ENCODE measurements at regions of chr1 and their contacts with region 1.

Region 1: GRCh38 chr1:155127105-155127964 is at the start of gene EFNA1:
- DNase-seq: peak; percentile 89 to 92
- H3K4me3 ChIP-seq: peak within 1 kb of the TSS; percentile 67 to 94 (median 82)
- H3K27ac ChIP-seq: peak within 1 kb of the TSS; percentile 96 to 98 (median 98)
- H3K4me1 ChIP-seq: peaks cover 43 to 54% of the 10 kb centered on the region in 2 donors
- H3K27me3 ChIP-seq: no peaks in the 10 kb centered on the region
- CTCF ChIP-seq: no peak
- POLR2A ChIP-seq: peak; percentile 80 to 96
- total RNA-seq, gene EFNA1: 56.1 to 129 (median 83.1) TPM

Region 2: DNA sequence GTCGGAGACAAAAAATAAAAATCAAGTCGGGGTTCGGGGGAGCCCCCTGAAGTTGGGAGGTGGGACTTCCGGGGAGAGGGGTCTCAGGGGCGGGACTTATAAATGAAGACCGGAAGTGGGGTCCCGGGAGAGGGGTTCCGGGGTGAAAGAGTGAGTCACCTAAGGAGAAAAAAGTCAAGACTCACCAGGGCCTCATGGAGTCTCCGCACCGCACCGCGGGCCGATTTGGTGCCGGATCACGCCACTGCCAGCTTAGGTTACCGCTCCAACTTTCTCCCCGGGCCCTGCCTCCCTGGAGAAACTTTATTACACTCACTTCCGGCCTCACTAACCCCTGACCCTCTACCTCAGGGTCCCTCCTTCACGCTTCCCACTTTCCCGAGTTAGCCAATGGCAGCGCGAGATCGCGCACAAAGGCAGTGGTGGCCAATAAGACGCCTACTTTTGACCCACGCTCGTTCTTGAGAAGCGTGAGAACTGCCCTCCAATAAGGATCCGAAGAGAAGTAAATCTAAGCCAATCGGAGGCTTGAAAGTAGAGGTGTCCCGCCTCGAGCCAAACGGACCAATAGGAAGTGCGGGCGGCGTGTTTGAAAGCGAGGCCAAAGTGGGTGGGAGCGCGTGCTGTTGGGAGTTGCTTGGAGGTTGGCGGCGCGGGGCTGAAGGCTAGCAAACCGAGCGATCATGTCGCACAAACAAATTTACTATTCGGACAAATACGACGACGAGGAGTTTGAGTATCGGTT is 153.1 kb before region 1 on chr1 and contains the start of gene CKS1B:
- intact Hi-C with region 1: no loop called
- DNase-seq: peak; percentile 97 to 98
- H3K4me3 ChIP-seq: peak within 1 kb of the TSS; percentile 16 to 73 (median 51)
- H3K27ac ChIP-seq: peak within 1 kb of the TSS; percentile 95 to 99 (median 98)
- H3K4me1 ChIP-seq: peaks cover 37 to 51% of the 10 kb centered on the region in 2 donors
- H3K27me3 ChIP-seq: no peaks in the 10 kb centered on the region
- CTCF ChIP-seq: no peak
- POLR2A ChIP-seq: peak in 1 of 2 donors; percentile 55
- total RNA-seq, gene CKS1B: 14.3 to 29.5 (median 22.6) TPM

Region 3: GRCh38 chr1:155091071-155091709 is 36.1 kb before region 1 on chr1:
- intact Hi-C with region 1: loop called (anchors 5 kb)
- DNase-seq: peak; percentile 74 to 80
- H3K4me3 ChIP-seq: no peak overlapping the region
- H3K27ac ChIP-seq: no peak overlapping the region
- H3K4me1 ChIP-seq: peaks cover 9 to 36% of the 10 kb centered on the region in 2 donors
- H3K27me3 ChIP-seq: no peaks in the 10 kb centered on the region
- CTCF ChIP-seq: peak; percentile 91 to 99 (median 95)
- POLR2A ChIP-seq: no peak

Region 4: DNA sequence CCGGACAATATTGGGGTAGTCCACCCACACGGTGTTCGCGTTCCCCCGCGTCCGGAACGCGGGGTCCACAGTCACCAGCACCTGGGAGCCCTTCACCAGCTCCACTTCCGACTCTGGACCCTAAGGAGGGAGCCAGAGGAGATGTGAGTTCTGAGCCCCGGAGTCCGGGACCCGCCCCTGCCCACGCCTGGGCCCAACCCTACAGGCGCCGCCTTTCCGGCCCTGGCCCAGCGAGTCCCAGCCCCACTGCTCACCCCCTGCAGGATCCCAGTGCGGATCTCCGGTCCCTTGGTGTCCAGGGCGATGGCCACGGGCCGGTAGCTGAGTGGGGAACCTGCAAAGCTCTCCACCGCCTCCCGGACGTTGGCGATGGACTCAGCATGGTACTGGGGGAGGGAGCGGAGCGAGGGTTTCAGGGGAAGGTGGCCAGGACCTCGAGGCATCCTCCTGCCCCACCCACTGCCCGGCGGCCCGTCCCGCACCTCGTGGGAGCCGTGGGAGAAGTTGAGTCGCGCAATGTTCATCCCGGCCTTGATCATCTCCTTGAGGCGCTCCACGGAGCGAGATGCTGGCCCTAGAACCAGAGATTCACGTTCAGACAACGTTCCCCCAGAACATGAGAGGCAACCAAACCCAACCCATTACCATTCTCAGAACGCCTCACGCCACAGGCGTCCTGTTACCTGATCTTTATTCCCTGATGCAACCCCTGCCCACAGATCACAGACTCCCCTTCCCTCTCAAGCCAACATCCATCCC is 168.0 kb after region 1 on chr1:
- intact Hi-C with region 1: no loop called
- DNase-seq: no peak
- H3K4me3 ChIP-seq: no peak overlapping the region
- H3K27ac ChIP-seq: no peak overlapping the region
- H3K4me1 ChIP-seq: peaks cover 5% of the 10 kb centered on the region in 2 donors
- H3K27me3 ChIP-seq: peaks cover 8% of the 10 kb centered on the region
- CTCF ChIP-seq: no peak
- POLR2A ChIP-seq: no peak